PC-9 (cell line): ENCODE measurements at regions of chr9 and their contacts with region 1.

Region 1: GRCh38 chr9:97468658-97469448 is 32.6 kb upstream of the TMOD1 start:
- DNase-seq: peak in 1 of 2 experiments; percentile 67
- H3K4me3 ChIP-seq: no peak overlapping the region
- H3K27ac ChIP-seq: no peak overlapping the region
- H3K4me1 ChIP-seq: no peaks in the 10 kb centered on the region
- H3K27me3 ChIP-seq: no peaks in the 10 kb centered on the region
- CTCF ChIP-seq: peak; percentile 85

Region 2: DNA sequence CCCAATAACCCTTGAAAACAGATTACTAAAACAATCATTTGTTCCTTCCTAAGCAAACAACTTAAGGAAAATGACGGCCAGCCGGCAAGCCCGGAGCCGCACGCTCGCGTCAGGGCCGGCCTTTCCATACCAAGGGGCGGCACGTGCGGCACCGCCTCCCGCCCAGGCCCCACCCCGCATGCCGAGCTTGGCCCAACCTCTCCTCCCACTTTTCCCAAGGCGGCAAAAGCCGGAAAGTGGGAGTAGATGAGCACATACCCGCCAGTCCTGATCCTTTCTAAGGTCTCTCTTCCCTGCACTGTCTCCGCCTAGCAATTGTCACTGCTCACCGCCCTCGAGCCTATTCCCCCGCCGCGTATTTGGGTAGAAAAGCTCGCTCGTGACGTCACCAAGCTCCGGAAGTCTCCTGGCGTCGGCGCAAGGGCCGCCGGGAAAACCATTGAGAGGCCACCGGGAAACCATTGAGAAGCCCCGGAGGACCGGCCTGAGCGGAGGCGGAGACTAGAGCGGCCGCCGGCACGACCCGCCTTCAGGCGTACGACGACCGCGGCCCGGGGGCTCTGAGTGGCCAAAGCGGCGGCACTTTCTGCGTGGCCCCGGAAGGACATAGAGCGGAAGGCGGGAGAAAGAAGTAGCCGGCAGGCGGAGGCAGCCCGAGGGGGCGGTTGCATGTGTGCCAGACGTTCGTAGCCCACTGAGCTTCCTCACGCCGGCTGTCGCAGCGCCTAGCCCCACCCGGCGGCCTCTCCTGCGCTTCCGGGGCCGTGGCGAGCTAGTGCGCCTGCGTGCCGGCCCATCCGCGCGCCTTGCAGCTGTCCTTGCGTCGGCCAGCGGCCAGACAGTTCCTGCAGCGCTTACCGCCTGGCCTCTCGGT is 164.4 kb after region 1 on chr9 and contains the starts of genes NCBP1 and TSTD2:
- CTCF ChIA-PET with region 1: interaction called, 10 read pairs
- POLR2A ChIA-PET with region 1: no interaction called
- intact Hi-C with region 1: no loop called
- DNase-seq: peak; percentile 94 to 98
- H3K4me3 ChIP-seq: peak within 1 kb of the TSS; percentile 95
- H3K27ac ChIP-seq: peak within 1 kb of the TSS; percentile 99
- H3K4me1 ChIP-seq: peaks cover 38% of the 10 kb centered on the region
- H3K27me3 ChIP-seq: no peaks in the 10 kb centered on the region
- CTCF ChIP-seq: no peak
- total RNA-seq, gene NCBP1: 38.6 and 40.2 TPM in 2 replicates
- total RNA-seq, gene TSTD2: 17.0 and 19.3 TPM in 2 replicates